Cardiac septum (tissue), 1 donor: ENCODE measurements at regions of chr6 and their contacts with region 1.

Region 1: DNA sequence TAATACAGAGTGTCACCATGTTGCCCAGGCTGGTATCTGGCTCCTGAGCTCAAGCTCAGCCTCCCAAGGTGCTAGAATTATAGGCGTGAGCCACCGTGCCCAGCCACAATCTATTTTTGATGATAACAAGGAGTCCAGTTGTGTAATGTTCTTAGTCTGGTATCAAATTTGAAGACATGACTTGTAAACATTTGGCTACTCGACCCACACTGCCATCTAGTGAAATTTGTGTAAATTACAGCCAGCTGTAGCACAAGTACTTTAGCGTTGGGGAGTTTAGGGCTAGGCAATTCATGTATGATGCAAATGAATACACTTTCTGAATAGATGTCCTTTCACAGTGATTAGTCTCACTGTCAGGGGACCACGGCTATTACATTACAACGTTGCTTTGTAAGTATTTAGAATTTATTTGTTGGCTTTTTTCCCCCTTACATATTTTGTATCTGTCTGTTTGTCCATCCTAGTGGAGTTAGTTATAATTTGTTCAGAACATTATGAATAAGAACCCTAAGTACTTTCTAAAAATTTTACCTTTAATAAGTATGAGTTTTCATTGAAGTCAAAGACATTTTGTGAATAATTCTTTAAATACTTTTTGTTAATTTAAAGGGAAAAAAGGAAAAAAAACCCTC is 139.7 kb downstream of the PRDM13 start:
- DNase-seq: no peak

Region 2: DNA sequence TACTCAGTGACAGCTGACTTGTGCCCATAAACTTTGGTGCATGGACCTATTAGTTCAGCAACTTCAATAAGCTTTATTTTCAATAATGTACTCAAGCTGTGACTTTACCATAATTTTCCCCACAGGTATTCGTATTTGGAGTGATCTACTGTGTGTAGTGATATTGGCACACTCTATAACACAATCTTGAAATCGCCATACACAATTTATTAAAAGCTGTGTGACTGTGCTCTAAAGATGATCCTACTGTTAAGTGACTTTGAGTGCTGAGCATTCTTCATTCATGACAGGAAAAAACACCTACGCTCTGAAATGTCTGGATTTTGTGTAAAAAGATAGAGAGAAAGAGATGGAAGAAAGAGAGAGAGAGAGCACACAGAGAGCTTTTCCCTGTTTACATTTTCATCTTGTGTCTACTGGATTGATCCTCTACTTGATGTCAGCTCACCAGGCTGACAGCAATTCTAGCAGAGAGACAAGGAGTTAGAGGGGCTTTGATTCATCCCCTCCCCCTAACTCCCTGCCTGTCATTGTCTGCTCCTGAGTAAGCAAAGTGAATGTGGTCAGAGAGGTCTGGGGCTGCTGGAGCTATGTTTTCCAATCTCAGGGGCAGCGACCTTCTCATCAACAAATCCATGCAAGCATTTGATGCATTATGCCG is 1450.7 kb before region 1 on chr6:
- intact Hi-C with region 1: no loop called
- DNase-seq: no peak

Region 3: GRCh38 chr6:99467509-99468106 is 278.8 kb before region 1 on chr6:
- intact Hi-C with region 1: loop called (anchors 5 kb)
- DNase-seq: no peak

Region 4: GRCh38 chr6:99603421-99604165 is 142.8 kb before region 1 on chr6:
- intact Hi-C with region 1: loop called (anchors 10 kb)
- DNase-seq: no peak